ENCODE measurements at regions of chr3 and their contacts with region 1.

Region 1: DNA sequence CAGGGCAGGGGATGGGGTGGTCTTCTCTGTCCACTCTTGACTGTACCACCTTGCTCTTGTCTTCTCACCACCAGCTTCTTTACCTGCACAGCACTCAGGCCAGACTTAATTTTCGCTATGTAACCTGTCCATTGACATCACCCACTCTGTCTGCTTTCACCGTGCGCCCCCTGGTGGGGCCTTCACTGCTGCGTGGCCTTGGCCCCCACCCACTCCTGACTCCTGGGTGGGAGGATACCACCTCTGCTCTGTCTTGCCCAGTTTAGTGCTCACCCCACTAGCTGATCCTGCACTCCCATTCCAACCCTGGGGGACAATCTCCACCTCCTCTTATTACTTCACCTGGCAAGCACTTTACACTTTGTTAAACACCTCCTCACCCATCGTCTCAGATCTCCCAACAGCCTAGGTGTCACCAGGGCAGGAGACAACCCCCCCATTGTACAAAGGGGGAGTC is 17.7 kb downstream of the PTH1R start:
- DNase-seq: peak in 1 of 2 experiments; percentile 80
- H3K4me3 ChIP-seq: no peak overlapping the region
- H3K27ac ChIP-seq: no peak overlapping the region
- H3K4me1 ChIP-seq: peaks cover 4 to 18% (median 13%) of the 10 kb centered on the region in 4 experiments
- H3K27me3 ChIP-seq: peaks cover 13 to 70% (median 52%) of the 10 kb centered on the region in 4 experiments
- CTCF ChIP-seq: peak in 2 of 3 experiments; percentile 68 to 75; a peak in 3 of 4 replicates
- EP300 ChIP-seq: no peak
- POLR2A ChIP-seq: no peak
- RAD21 ChIP-seq: peak; percentile 68 to 72

Region 2: DNA sequence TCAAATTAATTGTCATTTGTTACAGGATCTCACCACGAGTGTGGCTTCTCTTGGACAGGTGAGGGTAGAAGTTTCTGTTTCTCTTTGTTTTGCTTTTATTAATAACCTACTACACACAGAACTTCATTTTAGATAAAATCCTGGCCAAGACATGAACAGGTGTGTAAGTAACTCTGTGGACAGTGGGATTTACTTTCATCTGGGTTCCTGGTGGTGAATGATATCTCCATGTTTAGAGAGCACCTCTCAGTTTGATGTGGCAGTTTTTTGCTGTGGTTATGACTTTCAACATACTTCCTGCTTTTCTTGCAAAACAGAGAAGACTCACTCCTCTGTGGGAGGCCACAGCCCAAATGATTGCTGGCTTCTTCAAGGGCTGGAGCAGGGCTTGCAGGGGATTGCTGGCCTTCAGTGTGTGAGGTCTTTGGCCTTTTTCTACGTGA is 796.9 kb before region 1 on chr3:
- CTCF ChIA-PET with region 1: no interaction called
- POLR2A ChIA-PET with region 1: no interaction called
- DNase-seq: no peak
- H3K4me3 ChIP-seq: no peak overlapping the region
- H3K27ac ChIP-seq: no peak overlapping the region
- H3K4me1 ChIP-seq: no peaks in the 10 kb centered on the region
- H3K27me3 ChIP-seq: no peaks in the 10 kb centered on the region
- CTCF ChIP-seq: no peak
- EP300 ChIP-seq: no peak
- POLR2A ChIP-seq: no peak
- RAD21 ChIP-seq: no peak

Region 3: DNA sequence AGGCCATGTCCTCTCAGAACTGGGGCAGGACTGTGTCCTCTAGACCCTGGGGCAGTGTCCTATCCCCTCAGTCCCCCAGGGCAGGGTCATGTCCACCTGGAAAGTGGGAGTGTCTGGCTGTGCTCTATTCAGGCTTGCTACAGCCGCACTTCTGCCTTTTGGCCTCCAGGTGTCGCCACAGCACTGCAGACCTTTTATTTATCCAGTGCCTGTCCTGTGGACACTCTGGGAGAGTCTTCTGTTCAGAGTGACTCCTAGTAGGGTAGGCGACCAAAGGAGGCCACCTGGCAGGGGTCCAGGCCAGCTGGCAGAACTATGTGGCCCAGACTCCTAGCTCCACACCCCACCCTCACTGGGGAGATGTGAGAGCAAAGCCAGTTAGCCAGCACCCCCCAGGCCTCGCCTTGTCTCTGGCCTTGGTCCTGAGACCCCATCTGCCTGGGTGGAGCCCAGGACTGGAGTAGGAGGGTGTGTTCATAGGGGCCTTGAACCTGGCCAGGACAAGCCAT is 190.2 kb before region 1 on chr3:
- CTCF ChIA-PET with region 1: interaction called, 91 read pairs
- POLR2A ChIA-PET with region 1: no interaction called
- DNase-seq: peak in 1 of 2 experiments; percentile 88
- H3K4me3 ChIP-seq: no peak overlapping the region
- H3K27ac ChIP-seq: no peak overlapping the region
- H3K4me1 ChIP-seq: peaks cover 0 to 9% (median 2%) of the 10 kb centered on the region in 4 experiments; a peak in 4 of 7 replicates
- H3K27me3 ChIP-seq: peaks cover 2 to 21% (median 19%) of the 10 kb centered on the region in 4 experiments; a peak in 6 of 7 replicates
- CTCF ChIP-seq: peak in 2 of 3 experiments; percentile 90 to 97; a peak in 3 of 4 replicates
- EP300 ChIP-seq: no peak
- POLR2A ChIP-seq: no peak
- RAD21 ChIP-seq: peak; percentile 97 to 98

Region 4: DNA sequence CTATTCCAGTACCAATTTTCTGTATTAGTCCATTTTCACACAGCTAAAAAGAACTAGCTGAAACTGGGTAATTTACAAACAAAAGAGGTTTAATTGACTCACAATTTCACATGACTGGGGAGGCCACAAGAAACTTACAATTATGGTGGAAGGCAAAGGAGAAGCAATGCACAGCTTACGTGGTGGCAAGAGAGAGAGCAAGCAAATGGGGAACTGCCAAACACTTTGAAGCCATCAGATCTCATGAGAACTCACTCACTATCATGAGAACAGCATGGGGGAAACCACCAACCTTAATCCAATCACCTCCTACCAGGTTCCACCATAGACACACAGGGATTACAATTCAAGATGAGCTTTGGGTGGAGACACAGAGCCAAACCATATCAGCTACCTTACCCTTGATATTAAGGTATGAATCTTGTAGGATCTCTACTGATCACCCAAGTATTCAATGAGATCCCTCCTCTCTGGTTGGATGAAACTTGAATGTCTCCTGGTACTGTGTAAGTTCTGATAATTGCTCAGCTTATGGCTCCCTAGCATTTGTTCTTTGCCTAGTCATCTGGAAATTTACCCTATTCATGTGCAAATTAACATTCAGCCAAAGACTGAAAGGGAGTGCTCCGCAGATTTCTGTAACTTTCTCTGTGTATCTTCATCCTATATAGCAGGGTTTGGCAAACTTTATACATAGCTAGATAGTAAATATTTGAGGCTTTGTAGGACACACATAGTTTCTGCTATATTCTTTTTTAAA is 70.8 kb before region 1 on chr3:
- CTCF ChIA-PET with region 1: no interaction called
- POLR2A ChIA-PET with region 1: no interaction called
- DNase-seq: no peak
- H3K4me3 ChIP-seq: no peak overlapping the region
- H3K27ac ChIP-seq: no peak overlapping the region
- H3K4me1 ChIP-seq: peaks cover 0 to 5% (median 0%) of the 10 kb centered on the region in 4 experiments; a peak in 1 of 7 replicates
- H3K27me3 ChIP-seq: no peaks in the 10 kb centered on the region
- CTCF ChIP-seq: no peak
- EP300 ChIP-seq: no peak
- POLR2A ChIP-seq: no peak
- RAD21 ChIP-seq: no peak

Region 5: GRCh38 chr3:46845791-46846623 is 49.2 kb before region 1 on chr3:
- CTCF ChIA-PET with region 1: interaction called, 38 read pairs
- POLR2A ChIA-PET with region 1: interaction called, 3 read pairs
- DNase-seq: peak; percentile 56 to 89
- H3K4me3 ChIP-seq: peak overlapping the region; percentile 28 to 63 (median 37)
- H3K27ac ChIP-seq: peak overlapping the region; percentile 20; the same call in 1 of the 2 replicates
- H3K4me1 ChIP-seq: peaks cover 0 to 10% (median 8%) of the 10 kb centered on the region in 4 experiments; a peak in 6 of 7 replicates
- H3K27me3 ChIP-seq: peaks cover 0 to 13% (median 5%) of the 10 kb centered on the region in 4 experiments; a peak in 4 of 7 replicates
- CTCF ChIP-seq: peak in 2 of 3 experiments; percentile 42 to 65; a peak in 3 of 4 replicates
- EP300 ChIP-seq: no peak
- POLR2A ChIP-seq: no peak
- RAD21 ChIP-seq: peak; percentile 36 to 59; a peak in 3 of 4 replicates

Region 6: GRCh38 chr3:46874430-46874829 is 20.8 kb before region 1 on chr3:
- CTCF ChIA-PET with region 1: interaction called, 88 read pairs
- POLR2A ChIA-PET with region 1: no interaction called
- DNase-seq: no peak
- H3K4me3 ChIP-seq: no peak overlapping the region
- H3K27ac ChIP-seq: no peak overlapping the region
- H3K4me1 ChIP-seq: peaks cover 0 to 9% (median 0%) of the 10 kb centered on the region in 4 experiments; a peak in 2 of 7 replicates
- H3K27me3 ChIP-seq: peaks cover 3 to 49% (median 36%) of the 10 kb centered on the region in 4 experiments
- CTCF ChIP-seq: no peak
- EP300 ChIP-seq: no peak
- POLR2A ChIP-seq: no peak
- RAD21 ChIP-seq: no peak

Region 7: DNA sequence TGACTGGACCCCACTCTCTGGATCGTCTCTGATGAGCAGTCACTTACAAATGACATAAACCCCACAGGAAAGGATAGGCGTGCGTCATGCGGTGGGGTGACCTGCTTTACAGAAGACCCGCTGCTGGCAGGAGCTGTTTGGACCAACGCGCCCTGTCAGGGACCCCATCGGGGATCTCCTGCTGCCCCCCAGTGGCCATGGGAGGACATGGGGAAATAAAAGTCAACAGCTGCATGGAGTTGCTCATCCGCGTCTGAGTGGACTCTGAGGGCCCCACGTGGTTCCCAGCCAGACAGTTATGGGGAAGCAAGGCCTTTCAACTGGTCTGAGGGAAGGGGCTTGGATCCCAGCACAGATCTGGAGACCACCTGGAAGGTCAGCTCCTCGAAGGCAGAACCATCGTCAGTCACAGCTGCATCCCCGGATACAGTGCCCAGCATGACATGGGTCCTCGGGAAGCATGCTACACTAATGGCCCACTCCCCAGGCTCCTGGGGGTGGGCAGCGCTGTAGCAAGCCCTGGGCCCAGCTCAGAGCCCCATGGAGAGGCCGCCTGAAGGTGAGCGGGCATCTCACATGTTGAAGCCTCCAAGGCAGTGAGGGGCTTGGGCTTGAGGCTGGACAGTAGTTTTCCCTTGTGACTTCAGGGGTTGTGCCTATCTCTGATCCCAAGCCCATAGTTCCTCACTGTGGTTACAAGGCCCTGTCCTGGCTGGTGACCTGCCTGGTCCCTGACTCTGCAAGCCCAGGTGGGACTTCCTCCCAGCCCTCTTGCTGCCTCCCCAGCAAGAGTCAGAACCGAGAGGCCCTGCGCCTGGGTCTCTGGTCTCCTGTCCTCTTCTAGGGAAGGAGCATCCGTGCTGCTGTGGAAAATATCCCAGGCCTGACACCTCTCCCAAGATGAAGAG is 14.6 kb after region 1 on chr3:
- CTCF ChIA-PET with region 1: interaction called, 28 read pairs
- POLR2A ChIA-PET with region 1: interaction called, 3 read pairs
- DNase-seq: peak; percentile 65 to 95
- H3K4me3 ChIP-seq: no peak overlapping the region
- H3K27ac ChIP-seq: no peak overlapping the region
- H3K4me1 ChIP-seq: peaks cover 0 to 3% (median 1%) of the 10 kb centered on the region in 4 experiments; a peak in 2 of 7 replicates
- H3K27me3 ChIP-seq: no peaks in the 10 kb centered on the region; a peak in 2 of 7 replicates
- CTCF ChIP-seq: peak in 2 of 3 experiments; percentile 88 to 97; a peak in 3 of 4 replicates
- EP300 ChIP-seq: no peak
- POLR2A ChIP-seq: no peak
- RAD21 ChIP-seq: peak; percentile 97 to 98

Region 8: DNA sequence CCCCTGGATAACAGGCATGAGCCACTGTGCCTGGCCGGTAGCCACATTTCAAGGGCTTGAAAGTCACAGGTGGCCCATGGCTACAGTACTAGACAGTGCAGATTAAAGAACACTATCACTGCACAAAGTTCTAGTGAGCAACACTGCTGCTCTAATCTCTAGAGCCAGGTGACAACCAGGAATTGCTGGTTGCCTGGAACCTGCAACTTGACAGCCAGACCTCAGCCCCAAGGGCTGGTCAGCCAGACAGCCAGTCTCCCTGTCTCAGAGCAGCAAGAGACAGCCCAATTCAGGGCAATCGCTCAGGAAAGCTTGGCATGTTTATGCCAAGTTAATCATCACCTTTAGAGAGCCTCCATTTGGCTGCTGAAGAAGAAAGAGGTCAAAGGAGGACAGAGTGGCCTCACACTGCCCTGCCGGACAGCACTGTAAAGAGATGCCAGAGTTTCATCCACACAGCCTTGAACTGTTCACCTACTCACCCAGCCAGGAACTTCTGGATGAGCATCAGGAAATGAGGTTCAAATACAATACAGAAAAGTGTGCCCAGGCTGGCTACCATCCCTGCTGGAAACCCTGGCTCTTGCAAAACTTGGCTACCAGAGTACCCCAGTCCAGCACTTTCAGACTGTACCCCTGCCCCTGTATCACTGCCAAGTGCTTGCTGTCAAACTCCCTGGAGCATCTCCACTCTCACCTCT is 75.3 kb after region 1 on chr3:
- CTCF ChIA-PET with region 1: no interaction called
- POLR2A ChIA-PET with region 1: no interaction called
- DNase-seq: no peak
- H3K4me3 ChIP-seq: no peak overlapping the region
- H3K27ac ChIP-seq: no peak overlapping the region
- H3K4me1 ChIP-seq: 0 out of 7 replicates have a peak, but pooled peaks cover 0 to 2% (median 0%) of the 10 kb centered on the region in 4 experiments
- H3K27me3 ChIP-seq: no peaks in the 10 kb centered on the region
- CTCF ChIP-seq: no peak
- EP300 ChIP-seq: no peak
- POLR2A ChIP-seq: no peak
- RAD21 ChIP-seq: no peak

Region 9: DNA sequence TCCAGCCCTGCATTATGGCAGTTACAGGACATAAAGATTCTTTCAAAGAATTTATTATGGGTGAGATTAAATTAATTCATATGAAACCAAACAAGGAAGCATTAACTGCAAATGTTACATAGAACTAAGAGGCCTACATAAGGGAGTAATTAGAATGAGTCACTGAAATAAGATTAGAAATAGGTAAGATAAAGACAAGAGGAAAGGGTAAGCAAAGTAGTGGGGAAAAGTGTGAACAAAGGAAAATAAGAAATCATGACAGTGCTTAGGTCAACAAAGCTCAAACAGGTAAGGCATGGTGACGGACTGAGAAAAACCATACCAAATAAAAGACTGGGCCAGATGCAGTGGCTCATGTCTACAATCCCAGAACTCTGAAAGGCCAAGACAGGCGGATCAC is 194.4 kb after region 1 on chr3:
- CTCF ChIA-PET with region 1: no interaction called
- POLR2A ChIA-PET with region 1: no interaction called
- DNase-seq: no peak
- H3K4me3 ChIP-seq: no peak overlapping the region
- H3K27ac ChIP-seq: no peak overlapping the region
- H3K4me1 ChIP-seq: no peaks in the 10 kb centered on the region
- H3K27me3 ChIP-seq: no peaks in the 10 kb centered on the region
- CTCF ChIP-seq: no peak
- EP300 ChIP-seq: no peak
- POLR2A ChIP-seq: no peak
- RAD21 ChIP-seq: no peak